ENCODE measurements at regions of chr17 and their contacts with region 1.

Region 1: DNA sequence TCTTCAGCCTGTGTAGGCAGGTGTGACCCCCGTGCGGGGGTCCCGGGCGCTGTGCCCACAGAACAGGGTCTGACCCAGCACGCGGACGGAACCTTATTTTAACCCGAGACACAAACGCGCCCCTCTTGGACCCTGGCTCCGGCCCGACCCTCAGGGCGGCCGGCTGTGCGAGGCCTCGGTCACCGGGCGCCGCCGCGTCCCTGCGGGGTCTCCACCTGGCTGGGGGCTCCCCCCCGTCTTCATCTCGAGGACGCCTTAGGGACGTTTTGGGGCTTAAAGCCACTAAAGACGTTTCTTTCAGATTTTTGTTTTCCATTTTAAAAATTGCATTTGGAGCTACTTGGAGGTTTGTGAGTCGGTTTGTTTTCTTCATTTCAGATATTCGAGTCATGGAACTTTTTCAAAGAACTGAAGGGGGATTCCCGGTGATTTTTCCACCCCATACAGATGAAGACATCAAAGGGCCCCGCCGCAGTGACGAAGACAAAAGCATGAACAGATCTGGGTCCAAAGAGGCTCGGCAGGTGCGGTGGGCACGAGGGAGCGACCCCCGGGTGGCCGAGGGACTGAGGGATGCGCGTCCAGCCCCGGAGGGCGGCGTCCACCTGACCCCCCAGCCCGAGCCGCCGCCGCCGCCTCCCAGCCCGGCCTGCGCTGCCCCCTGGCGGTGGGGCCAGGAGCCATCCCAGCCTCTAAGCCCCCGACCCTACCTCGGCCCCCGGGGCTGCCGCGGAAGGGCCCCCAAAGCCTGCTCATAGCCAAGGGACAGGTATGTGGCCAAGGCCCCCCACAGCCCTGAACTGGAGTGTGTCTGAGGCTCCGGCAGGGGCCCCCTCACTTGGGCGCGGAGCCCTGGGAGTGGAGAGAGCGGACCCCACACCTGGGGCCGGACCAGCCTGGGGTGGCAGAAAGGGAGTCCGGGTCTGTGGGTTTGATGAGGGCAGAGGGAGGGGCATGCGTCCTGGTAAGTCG is 3.8 kb upstream of the CD7 start:
- DNase-seq: peak in 1 of 5 donors; percentile 81
- H3K4me3 ChIP-seq: no peak overlapping the region
- H3K27ac ChIP-seq: no peak overlapping the region
- H3K4me1 ChIP-seq: no peaks in the 10 kb centered on the region
- H3K27me3 ChIP-seq: no peaks in the 10 kb centered on the region
- CTCF ChIP-seq: peak; percentile 91

Region 2: DNA sequence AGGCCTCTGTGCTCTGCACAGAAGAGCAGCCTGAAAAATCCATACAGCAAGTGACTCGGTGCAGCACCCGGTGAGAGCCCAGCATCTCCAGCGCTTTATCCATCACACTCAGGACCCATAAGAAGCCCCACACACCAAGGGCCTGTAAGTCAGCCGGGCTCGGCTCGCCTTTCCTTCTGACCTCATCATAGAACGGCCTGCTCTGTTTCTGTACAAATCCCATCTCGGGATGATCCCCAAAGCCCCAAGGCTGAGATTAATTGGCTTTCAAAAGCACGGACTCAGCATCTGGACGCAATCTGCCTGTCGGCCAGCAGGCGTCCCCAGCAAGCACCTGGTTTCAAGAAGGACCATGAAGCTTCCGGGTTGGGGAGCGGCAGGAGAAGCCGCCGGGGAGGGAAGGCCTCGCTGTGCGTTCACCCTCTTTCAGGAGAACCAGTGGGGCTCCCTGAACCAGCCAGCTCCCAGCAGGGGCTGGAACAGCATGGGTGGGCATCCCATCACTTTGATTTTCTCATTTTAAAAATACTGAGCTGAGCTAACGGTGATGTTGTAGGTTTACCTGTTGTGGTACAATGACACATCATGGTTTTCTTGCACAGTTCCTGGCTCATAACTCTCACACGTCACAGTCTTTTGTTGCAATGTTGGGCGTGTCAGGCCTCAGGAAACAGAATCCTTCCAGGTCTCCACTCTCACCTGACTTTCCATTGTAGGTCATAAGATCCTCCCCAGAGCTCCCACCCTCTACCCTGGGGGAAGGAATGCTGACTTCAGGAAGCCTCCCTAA is 115.3 kb before region 1 on chr17:
- intact Hi-C with region 1: loop called (anchors 10 kb)
- DNase-seq: peak; percentile 72 to 94 (median 81)
- H3K4me3 ChIP-seq: peak overlapping the region in 1 of 3 donors; percentile 26
- H3K27ac ChIP-seq: peak overlapping the region; percentile 28 to 48
- H3K4me1 ChIP-seq: peaks cover 0 to 2% (median 0%) of the 10 kb centered on the region in 3 donors
- H3K27me3 ChIP-seq: no peaks in the 10 kb centered on the region
- CTCF ChIP-seq: peak; percentile 92

Region 3: GRCh38 chr17:82230627-82231311 is 90.5 kb before region 1 on chr17:
- intact Hi-C with region 1: loop called (anchors 10 kb)
- DNase-seq: peak; percentile 71 to 96 (median 89)
- H3K4me3 ChIP-seq: peak overlapping the region in 1 of 3 donors; percentile 49
- H3K27ac ChIP-seq: peak overlapping the region; percentile 85 to 86
- H3K4me1 ChIP-seq: peaks cover 0 to 41% (median 13%) of the 10 kb centered on the region in 3 donors
- H3K27me3 ChIP-seq: no peaks in the 10 kb centered on the region
- CTCF ChIP-seq: peak; percentile 36

Measured in kidney (tissue), 22 donors.